ENCODE measurements at regions of chr11 and their contacts with region 1.

Region 1: DNA sequence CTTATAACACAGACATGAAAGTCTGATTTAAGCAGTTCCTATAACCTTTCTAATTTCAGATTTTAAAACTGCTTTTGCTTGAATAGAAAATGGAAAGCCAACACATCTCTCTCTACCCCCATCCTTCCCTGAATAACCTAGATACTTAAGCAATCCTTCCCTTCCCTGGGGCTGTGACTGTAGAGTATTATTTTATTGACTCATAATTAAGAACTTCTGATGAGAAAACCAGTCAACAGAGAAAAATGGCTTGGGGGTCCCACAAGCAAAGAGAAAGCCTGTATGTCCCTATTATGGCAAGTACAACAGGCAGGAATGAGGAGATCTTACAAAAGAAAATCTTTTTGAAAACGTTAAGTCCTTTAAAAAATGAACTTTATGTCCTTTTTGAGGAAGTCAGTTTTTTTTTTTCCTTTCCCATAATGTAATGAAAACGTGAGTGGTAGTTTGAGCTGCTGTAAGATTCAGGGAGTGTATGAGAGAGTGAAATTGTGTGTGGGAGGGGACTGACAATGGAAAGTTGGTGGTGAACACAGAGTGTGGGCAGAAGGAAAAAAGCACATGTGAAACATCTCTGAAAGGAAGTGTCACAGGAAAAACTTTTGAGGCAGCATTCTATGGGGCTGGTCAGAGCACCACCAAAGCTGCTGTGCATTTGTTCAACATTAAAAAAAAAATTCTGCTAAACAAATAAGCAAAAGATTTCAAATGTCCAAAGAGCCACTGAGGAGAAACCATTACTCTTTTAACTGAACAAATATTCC is 154.6 kb downstream of the MAML2 start:
- DNase-seq: peak in 2 of 9 experiments; percentile 26 to 35
- ATAC-seq: no peak
- H3K4me3 ChIP-seq: no peak overlapping the region
- H3K4me3 Mint-ChIP-seq: peak overlapping the region; percentile 42
- H3K27ac ChIP-seq: peak overlapping the region in 1 of 2 experiments; percentile 23
- H3K27ac Mint-ChIP-seq: peak overlapping the region; percentile 75
- H3K4me1 ChIP-seq: peaks cover 55% of the 10 kb centered on the region
- H3K4me1 Mint-ChIP-seq: peaks cover 78% of the 10 kb centered on the region
- H3K27me3 ChIP-seq: no peaks in the 10 kb centered on the region
- H3K27me3 Mint-ChIP-seq: no peaks in the 10 kb centered on the region
- CTCF ChIP-seq: no peak

Region 2: GRCh38 chr11:96154802-96155520 is 33.5 kb before region 1 on chr11:
- CTCF ChIA-PET with region 1: no interaction called
- POLR2A ChIA-PET with region 1: interaction called, 3 read pairs
- intact Hi-C with region 1: loop called in 1 of 2 experiments (anchors 5 kb)
- DNase-seq: no peak
- ATAC-seq: no peak
- H3K4me3 ChIP-seq: no peak overlapping the region
- H3K4me3 Mint-ChIP-seq: no peak overlapping the region
- H3K27ac ChIP-seq: no peak overlapping the region
- H3K27ac Mint-ChIP-seq: peak overlapping the region; percentile 16
- H3K4me1 ChIP-seq: peaks cover 39% of the 10 kb centered on the region
- H3K4me1 Mint-ChIP-seq: peaks cover 62% of the 10 kb centered on the region
- H3K27me3 ChIP-seq: no peaks in the 10 kb centered on the region
- H3K27me3 Mint-ChIP-seq: no peaks in the 10 kb centered on the region
- CTCF ChIP-seq: no peak

Region 3: DNA sequence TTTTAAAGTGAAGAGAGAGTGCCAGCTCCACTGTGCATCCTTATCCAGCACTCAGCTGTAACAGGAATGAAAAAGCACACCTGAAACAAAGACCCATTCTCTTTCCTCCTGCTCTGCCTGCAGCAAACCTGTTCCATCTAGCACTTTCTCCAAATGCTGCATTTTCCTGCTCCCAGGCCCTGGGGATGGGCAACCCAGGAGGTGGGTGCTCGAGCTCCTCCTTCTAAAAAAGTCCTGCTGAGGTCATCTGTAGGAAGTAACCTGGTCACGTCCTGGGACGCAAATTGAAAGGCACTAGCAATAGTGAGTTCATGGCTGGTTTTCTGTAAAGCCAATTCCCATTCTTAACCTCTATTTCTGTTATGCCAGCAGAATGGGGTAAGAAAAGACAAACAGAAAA is 19.2 kb before region 1 on chr11:
- CTCF ChIA-PET with region 1: no interaction called
- POLR2A ChIA-PET with region 1: no interaction called
- intact Hi-C with region 1: no loop called
- DNase-seq: no peak
- ATAC-seq: no peak
- H3K4me3 ChIP-seq: no peak overlapping the region
- H3K4me3 Mint-ChIP-seq: no peak overlapping the region
- H3K27ac ChIP-seq: no peak overlapping the region
- H3K27ac Mint-ChIP-seq: peak overlapping the region; percentile 52
- H3K4me1 ChIP-seq: peaks cover 36% of the 10 kb centered on the region
- H3K4me1 Mint-ChIP-seq: peaks cover 85% of the 10 kb centered on the region
- H3K27me3 ChIP-seq: no peaks in the 10 kb centered on the region
- H3K27me3 Mint-ChIP-seq: no peaks in the 10 kb centered on the region
- CTCF ChIP-seq: no peak

Region 4: GRCh38 chr11:96207459-96208449 is 19.3 kb after region 1 on chr11:
- CTCF ChIA-PET with region 1: no interaction called
- POLR2A ChIA-PET with region 1: no interaction called
- intact Hi-C with region 1: loop called in 1 of 2 experiments (anchors 2 kb)
- DNase-seq: peak in 5 of 9 experiments; percentile 20 to 72 (median 43)
- ATAC-seq: peak; percentile 48
- H3K4me3 ChIP-seq: peak overlapping the region; percentile 4 to 26
- H3K4me3 Mint-ChIP-seq: peak overlapping the region; percentile 35
- H3K27ac ChIP-seq: peak overlapping the region; percentile 67 to 76
- H3K27ac Mint-ChIP-seq: peak overlapping the region; percentile 89
- H3K4me1 ChIP-seq: peaks cover 96% of the 10 kb centered on the region
- H3K4me1 Mint-ChIP-seq: peaks cover 84% of the 10 kb centered on the region
- H3K27me3 ChIP-seq: no peaks in the 10 kb centered on the region
- H3K27me3 Mint-ChIP-seq: no peaks in the 10 kb centered on the region
- CTCF ChIP-seq: no peak